PC-9 (cell line): ENCODE measurements at regions of chr12 and their contacts with region 1.

Region 1: DNA sequence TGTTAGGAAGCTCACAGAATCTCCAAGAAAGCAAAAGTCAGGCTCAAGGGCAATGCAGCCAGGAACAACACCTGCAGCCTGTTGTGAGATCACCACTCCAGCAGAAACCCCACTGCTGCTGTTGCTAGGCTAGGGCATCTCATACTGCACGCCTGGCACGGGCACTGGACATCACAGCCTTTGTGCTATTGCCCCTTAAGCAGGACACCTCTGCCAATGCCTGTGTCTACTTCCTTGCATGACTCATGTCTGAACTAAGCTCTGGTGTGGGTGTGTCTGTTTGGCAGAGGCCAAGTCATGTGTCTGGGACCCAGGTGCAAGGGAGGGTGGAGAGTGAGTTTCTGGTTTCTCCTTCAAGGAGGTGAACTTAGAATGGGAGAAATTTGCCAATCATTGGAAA is 10.0 kb upstream of the DDX47 start:
- DNase-seq: peak; percentile 97 to 100
- H3K4me3 ChIP-seq: peak overlapping the region; percentile 47; the same call in 1 of the 2 replicates
- H3K27ac ChIP-seq: peak overlapping the region; percentile 100
- H3K4me1 ChIP-seq: peaks cover 91% of the 10 kb centered on the region
- H3K27me3 ChIP-seq: no peaks in the 10 kb centered on the region
- CTCF ChIP-seq: no peak

Region 2: DNA sequence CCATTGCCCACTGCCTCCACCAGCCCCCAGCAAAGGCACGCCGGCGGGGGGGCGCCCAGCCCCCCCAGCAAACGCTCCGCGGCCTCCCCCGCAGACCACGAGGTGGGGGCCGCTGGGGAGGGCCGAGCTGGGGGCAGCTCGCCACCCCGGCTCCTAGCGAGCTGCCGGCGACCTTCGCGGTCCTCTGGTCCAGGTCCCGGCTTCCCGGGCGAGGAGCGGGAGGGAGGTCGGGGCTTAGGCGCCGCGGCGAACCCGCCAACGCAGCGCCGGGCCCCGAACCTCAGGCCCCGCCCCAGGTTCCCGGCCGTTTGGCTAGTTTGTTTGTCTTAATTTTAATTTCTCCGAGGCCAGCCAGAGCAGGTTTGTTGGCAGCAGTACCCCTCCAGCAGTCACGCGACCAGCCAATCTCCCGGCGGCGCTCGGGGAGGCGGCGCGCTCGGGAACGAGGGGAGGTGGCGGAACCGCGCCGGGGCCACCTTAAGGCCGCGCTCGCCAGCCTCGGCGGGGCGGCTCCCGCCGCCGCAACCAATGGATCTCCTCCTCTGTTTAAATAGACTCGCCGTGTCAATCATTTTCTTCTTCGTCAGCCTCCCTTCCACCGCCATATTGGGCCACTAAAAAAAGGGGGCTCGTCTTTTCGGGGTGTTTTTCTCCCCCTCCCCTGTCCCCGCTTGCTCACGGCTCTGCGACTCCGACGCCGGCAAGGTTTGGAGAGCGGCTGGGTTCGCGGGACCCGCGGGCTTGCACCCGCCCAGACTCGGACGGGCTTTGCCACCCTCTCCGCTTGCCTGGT is 86.2 kb before region 1 on chr12 and contains the start of gene CDKN1B:
- CTCF ChIA-PET with region 1: interaction called, 5 read pairs
- POLR2A ChIA-PET with region 1: interaction called, 9 read pairs
- intact Hi-C with region 1: loop called (anchors 1 kb)
- DNase-seq: peak; percentile 82 to 98
- H3K4me3 ChIP-seq: peak within 1 kb of the TSS; percentile 96
- H3K27ac ChIP-seq: peak within 1 kb of the TSS; percentile 98
- H3K4me1 ChIP-seq: peaks cover 38% of the 10 kb centered on the region
- H3K27me3 ChIP-seq: no peaks in the 10 kb centered on the region
- CTCF ChIP-seq: no peak
- total RNA-seq, gene CDKN1B: 54.9 and 67.5 TPM in 2 replicates

Region 3: GRCh38 chr12:12819671-12820311 is 16.6 kb after region 1 on chr12:
- CTCF ChIA-PET with region 1: interaction called, 9 read pairs
- POLR2A ChIA-PET with region 1: interaction called, 20 read pairs
- intact Hi-C with region 1: loop called (anchors 1 kb)
- DNase-seq: peak; percentile 86 to 99
- H3K4me3 ChIP-seq: peak overlapping the region; percentile 29
- H3K27ac ChIP-seq: peak overlapping the region; percentile 94
- H3K4me1 ChIP-seq: peaks cover 100% of the 10 kb centered on the region
- H3K27me3 ChIP-seq: no peaks in the 10 kb centered on the region
- CTCF ChIP-seq: no peak

Region 4: GRCh38 chr12:12883369-12884001 is 80.3 kb after region 1 on chr12:
- CTCF ChIA-PET with region 1: no interaction called
- POLR2A ChIA-PET with region 1: interaction called, 12 read pairs
- intact Hi-C with region 1: no loop called
- DNase-seq: peak; percentile 74 to 99
- H3K4me3 ChIP-seq: peak overlapping the region; percentile 55; the same call in 1 of the 2 replicates
- H3K27ac ChIP-seq: peak overlapping the region; percentile 96
- H3K4me1 ChIP-seq: peaks cover 79% of the 10 kb centered on the region
- H3K27me3 ChIP-seq: no peaks in the 10 kb centered on the region
- CTCF ChIP-seq: no peak

Region 5: DNA sequence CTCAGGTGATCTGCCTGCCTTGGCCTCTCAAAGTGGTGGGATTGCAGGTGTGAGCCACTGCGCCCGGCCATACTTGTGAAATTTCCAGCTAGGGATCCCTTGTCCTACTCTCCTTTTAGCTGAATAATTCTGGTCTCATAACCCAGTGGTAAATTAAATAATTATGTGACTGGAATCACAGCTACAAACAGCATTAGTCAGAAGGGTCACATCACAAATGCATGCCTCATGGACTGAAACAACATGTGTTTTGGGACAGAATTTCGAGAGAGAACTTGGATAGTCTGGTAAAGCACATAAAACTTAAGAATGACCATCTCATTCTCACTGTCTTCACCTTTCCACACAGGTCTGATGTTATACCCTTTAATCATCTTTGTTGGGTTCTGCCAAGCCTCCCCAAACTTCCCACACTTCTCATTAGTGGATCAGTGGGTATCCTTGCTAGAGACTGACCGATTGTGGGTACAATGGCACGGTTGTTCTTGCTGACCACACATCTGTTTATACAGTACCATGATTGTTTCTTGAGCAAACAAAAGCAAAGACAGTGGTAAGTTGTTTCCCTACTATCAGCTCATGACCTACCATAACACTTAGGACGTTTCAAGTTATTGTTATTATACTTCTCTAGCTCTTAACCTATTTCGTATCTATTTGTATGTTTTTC is 143.6 kb after region 1 on chr12:
- CTCF ChIA-PET with region 1: no interaction called
- POLR2A ChIA-PET with region 1: no interaction called
- intact Hi-C with region 1: no loop called
- DNase-seq: no peak
- H3K4me3 ChIP-seq: no peak overlapping the region
- H3K27ac ChIP-seq: no peak overlapping the region
- H3K4me1 ChIP-seq: no peaks in the 10 kb centered on the region
- H3K27me3 ChIP-seq: no peaks in the 10 kb centered on the region
- CTCF ChIP-seq: no peak

Region 6: DNA sequence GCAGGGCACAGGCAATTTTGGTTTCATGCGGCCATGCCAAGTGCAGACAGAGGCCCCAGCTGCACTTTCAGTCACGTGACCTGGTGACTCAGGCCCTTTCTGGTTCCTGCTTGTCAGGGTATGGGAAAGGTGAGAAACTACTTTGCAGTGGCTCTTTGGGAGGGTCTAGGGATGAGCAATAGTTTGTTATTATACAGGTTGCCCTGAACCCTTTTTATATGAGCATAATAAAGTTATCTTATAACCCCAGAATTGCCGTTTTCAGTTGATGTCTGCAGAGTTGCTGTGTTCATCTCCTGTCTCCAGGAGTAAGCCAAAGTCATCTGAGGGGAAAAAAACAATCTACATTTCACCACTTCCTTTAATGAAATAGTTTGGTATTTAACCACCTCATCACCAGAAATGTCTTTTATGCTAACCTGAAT is 362.4 kb after region 1 on chr12:
- CTCF ChIA-PET with region 1: interaction called, 5 read pairs
- POLR2A ChIA-PET with region 1: interaction called, 13 read pairs
- intact Hi-C with region 1: loop called (anchors 5 kb)
- DNase-seq: peak; percentile 95 to 98
- H3K4me3 ChIP-seq: no peak overlapping the region
- H3K27ac ChIP-seq: peak overlapping the region; percentile 97
- H3K4me1 ChIP-seq: peaks cover 73% of the 10 kb centered on the region
- H3K27me3 ChIP-seq: no peaks in the 10 kb centered on the region
- CTCF ChIP-seq: no peak

Region 7: DNA sequence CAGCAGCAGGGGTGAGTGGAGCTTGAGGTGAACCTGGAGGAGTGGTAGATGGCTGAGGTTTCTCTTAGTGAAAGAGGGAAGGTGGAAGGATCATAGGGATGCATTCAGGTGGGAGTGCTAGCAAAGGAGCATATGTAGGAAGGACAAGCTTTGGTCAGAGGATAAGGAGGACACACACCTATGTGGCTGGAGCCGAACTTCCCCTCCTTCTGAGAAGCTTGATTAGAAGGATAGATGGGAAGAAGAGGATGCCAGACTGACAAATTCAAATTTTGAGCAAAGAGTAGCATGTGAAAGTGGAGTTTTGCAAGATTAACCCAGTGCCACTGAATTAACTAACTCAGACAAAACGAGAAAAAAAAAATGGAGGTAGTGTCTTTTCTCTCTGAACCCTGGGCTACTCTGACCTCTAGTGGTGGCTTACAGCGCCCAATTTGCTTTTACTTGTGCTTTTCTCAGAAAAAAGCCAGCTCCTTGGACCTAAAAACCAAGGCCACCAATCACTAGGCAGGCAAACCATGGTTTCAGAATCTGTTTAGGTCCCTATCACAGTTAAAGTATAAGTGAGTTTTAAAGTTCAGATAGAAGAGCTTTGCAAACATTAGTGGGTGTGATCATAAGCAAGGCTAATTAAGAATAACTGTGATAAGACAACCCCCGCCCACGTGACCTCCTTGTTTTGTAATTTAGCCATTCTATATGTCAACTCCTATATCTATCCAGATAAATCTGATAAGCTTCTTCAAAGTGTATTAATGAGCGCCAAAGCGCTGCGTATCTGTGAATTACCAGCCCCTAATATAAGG is 408.9 kb after region 1 on chr12:
- CTCF ChIA-PET with region 1: no interaction called
- POLR2A ChIA-PET with region 1: no interaction called
- intact Hi-C with region 1: loop called (anchors 5 kb)
- DNase-seq: peak in 1 of 2 experiments; percentile 64
- H3K4me3 ChIP-seq: no peak overlapping the region
- H3K27ac ChIP-seq: peak overlapping the region; percentile 99
- H3K4me1 ChIP-seq: peaks cover 48% of the 10 kb centered on the region
- H3K27me3 ChIP-seq: no peaks in the 10 kb centered on the region
- CTCF ChIP-seq: peak; percentile 71